ENCODE measurements at regions of chr5 and their contacts with region 1.

Region 1: GRCh38 chr5:60473654-60474053 is 226.3 kb downstream of the DEPDC1B start:
- DNase-seq: no peak
- H3K4me3 ChIP-seq: no peak overlapping the region
- H3K27ac ChIP-seq: peak overlapping the region in 1 of 2 donors; percentile 24
- H3K4me1 ChIP-seq: peaks cover 0 to 8% of the 10 kb centered on the region in 2 donors
- H3K27me3 ChIP-seq: no peaks in the 10 kb centered on the region
- CTCF ChIP-seq: no peak

Region 2: GRCh38 chr5:60507687-60508086 is 34.0 kb after region 1 on chr5:
- intact Hi-C with region 1: loop called (anchors 1 kb)
- DNase-seq: no peak
- H3K4me3 ChIP-seq: no peak overlapping the region
- H3K27ac ChIP-seq: peak overlapping the region; percentile 71 to 80
- H3K4me1 ChIP-seq: no peaks in the 10 kb centered on the region
- H3K27me3 ChIP-seq: no peaks in the 10 kb centered on the region
- CTCF ChIP-seq: no peak

Region 3: GRCh38 chr5:61207886-61208285 is 734.2 kb after region 1 on chr5:
- intact Hi-C with region 1: no loop called
- DNase-seq: no peak
- H3K4me3 ChIP-seq: no peak overlapping the region
- H3K27ac ChIP-seq: no peak overlapping the region
- H3K4me1 ChIP-seq: no peaks in the 10 kb centered on the region
- H3K27me3 ChIP-seq: no peaks in the 10 kb centered on the region
- CTCF ChIP-seq: no peak

Measured in ascending aorta (tissue), 2 donors.